ENCODE measurements at regions of chr17 and their contacts with region 1.

Region 1: GRCh38 chr17:39730095-39730921 is at the start of gene MIEN1:
- DNase-seq: peak; percentile 95
- H3K4me3 Mint-ChIP-seq: peak within 1 kb of the TSS; percentile 87
- H3K27ac Mint-ChIP-seq: peak within 1 kb of the TSS; percentile 84
- H3K4me1 Mint-ChIP-seq: peaks cover 14% of the 10 kb centered on the region
- H3K27me3 Mint-ChIP-seq: no peaks in the 10 kb centered on the region
- total RNA-seq, gene MIEN1: 35.2 to 36.5 TPM

Region 2: GRCh38 chr17:39687811-39688518 is 42.3 kb before region 1 on chr17 and contains the start of gene PGAP3:
- CTCF ChIA-PET with region 1: interaction called, 4 read pairs
- intact Hi-C with region 1: loop called (anchors 2 kb)
- DNase-seq: peak; percentile 89
- H3K4me3 Mint-ChIP-seq: peak within 1 kb of the TSS; percentile 98
- H3K27ac Mint-ChIP-seq: peak within 1 kb of the TSS; percentile 94
- H3K4me1 Mint-ChIP-seq: peaks cover 15% of the 10 kb centered on the region
- H3K27me3 Mint-ChIP-seq: no peaks in the 10 kb centered on the region
- total RNA-seq, gene PGAP3: 11.8 to 11.9 TPM

Measured in activated naive CD4-positive, alpha-beta T cell treated with anti-CD3 and anti-CD28 coated beads for 36 hours (primary cell).